ENCODE measurements at regions of chr22 and their contacts with region 1.

Region 1: GRCh38 chr22:36123673-36124630 is 36.6 kb downstream of the APOL3 start:
- DNase-seq: peak; percentile 94 to 96
- ATAC-seq: peak; percentile 96 to 99 (median 98)
- H3K4me3 ChIP-seq: peak overlapping the region in 9 of 10 donors; percentile 6 to 44 (median 29)
- H3K27ac ChIP-seq: peak overlapping the region; percentile 64 to 91 (median 81)
- H3K4me1 ChIP-seq: peaks cover 0 to 17% (median 7%) of the 10 kb centered on the region in 9 donors
- H3K27me3 ChIP-seq: no peaks in the 10 kb centered on the region
- CTCF ChIP-seq: peak; percentile 96 to 99 (median 98)

Region 2: DNA sequence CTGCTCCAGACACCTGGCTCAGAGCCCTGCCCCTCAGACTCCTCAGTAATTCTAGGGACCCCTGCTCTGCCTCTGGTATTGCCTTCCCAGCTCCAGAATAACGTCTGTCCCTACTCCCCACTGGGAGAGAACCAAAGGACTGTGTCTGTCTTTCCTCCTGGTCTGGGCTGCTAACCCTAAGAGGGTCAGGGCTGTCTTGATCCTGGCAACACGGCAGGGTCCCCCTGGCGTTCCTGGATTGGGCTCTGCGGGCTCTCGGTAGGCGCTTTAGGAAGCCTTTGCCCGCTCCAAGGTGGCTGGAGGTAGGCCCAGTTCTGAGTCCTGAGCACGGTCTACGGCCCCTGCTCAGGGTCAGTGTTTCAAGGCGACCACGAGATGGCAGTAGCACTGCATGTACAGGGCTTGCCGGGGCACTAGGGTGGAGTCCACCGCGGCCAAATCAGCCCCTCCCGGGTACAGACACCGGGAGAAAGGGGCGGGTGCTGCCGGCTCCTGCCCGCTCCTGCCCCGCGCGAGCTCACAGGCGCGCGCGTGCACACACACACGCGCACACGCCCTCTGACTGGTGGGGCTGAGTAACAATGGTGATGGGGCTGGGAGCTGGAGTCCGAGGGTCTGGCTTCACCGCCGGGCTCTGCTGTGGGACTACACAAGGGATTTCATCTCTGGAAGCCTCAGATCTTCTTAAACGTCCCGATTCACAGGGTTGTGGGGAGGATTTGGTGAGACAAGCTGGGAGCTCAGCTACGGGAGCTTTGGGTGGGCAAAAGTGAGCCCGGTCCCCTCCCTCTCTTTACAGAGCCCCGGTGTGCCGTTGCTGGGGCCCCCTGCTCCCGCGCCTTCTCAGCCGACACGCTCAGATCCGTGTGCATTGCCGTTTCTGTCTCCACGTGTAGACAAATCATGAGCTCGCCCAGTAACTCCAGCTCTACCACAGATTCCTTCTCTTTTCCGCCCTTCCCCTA is 773.1 kb before region 1 on chr22:
- intact Hi-C with region 1: loop called in 4 of 10 experiments (anchors 2 to 10 kb)
- DNase-seq: peak; percentile 92 to 93
- ATAC-seq: peak; percentile 85 to 92 (median 90)
- H3K4me3 ChIP-seq: peak overlapping the region in 9 of 10 donors; percentile 39 to 65 (median 61)
- H3K27ac ChIP-seq: peak overlapping the region in 8 of 10 donors; percentile 53 to 90 (median 73)
- H3K4me1 ChIP-seq: peaks cover 0 to 48% (median 13%) of the 10 kb centered on the region in 9 donors
- H3K27me3 ChIP-seq: no peaks in the 10 kb centered on the region
- CTCF ChIP-seq: peak; percentile 75 to 97 (median 94)

Region 3: GRCh38 chr22:35627264-35628041 is 496.5 kb before region 1 on chr22:
- intact Hi-C with region 1: loop called (anchors 2 to 10 kb)
- DNase-seq: peak; percentile 79 to 85
- ATAC-seq: peak; percentile 69 to 84 (median 78)
- H3K4me3 ChIP-seq: peak overlapping the region in 9 of 10 donors; percentile 28 to 71 (median 61)
- H3K27ac ChIP-seq: peak overlapping the region; percentile 11 to 93 (median 84)
- H3K4me1 ChIP-seq: peaks cover 3 to 37% (median 20%) of the 10 kb centered on the region in 9 donors
- H3K27me3 ChIP-seq: no peaks in the 10 kb centered on the region
- CTCF ChIP-seq: peak; percentile 17 to 75 (median 53)

Region 4: DNA sequence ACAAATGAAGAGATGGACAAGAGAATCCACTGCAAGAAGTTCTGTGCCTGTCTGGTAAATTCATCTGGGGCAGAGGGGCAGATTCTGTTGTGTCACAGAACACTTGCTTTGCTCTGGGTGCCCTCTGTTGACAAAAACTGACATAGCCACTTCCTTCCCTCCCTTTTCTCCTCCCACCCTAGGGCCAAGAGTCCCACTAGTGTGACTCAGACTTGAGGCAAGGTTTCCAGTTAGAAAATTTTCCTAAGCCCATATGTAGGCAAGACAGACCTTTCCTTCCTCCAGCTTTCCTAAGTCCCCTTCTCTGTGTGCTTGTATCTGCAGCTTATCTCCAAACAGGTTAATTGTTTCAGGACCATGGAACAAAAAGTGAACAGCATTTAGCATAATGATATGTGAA is 202.2 kb before region 1 on chr22:
- intact Hi-C with region 1: loop called in 1 of 10 experiments (anchors 2 kb)
- DNase-seq: peak in 1 of 2 donors; percentile 82
- ATAC-seq: peak; percentile 81 to 94 (median 90)
- H3K4me3 ChIP-seq: no peak overlapping the region
- H3K27ac ChIP-seq: peak overlapping the region in 6 of 10 donors; percentile 33 to 93 (median 58)
- H3K4me1 ChIP-seq: peaks cover 0 to 74% (median 53%) of the 10 kb centered on the region in 9 donors
- H3K27me3 ChIP-seq: no peaks in the 10 kb centered on the region
- CTCF ChIP-seq: peak; percentile 34 to 88 (median 75)

Region 5: GRCh38 chr22:36028646-36029405 is 95.1 kb before region 1 on chr22 and contains the start of gene RBFOX2:
- intact Hi-C with region 1: loop called in 1 of 10 experiments (anchors 5 kb)
- DNase-seq: peak; percentile 98 to 99
- ATAC-seq: peak; percentile 95 to 99 (median 96)
- H3K4me3 ChIP-seq: peak within 1 kb of the TSS; percentile 31 to 94 (median 87)
- H3K27ac ChIP-seq: peak within 1 kb of the TSS; percentile 64 to 93 (median 88)
- H3K4me1 ChIP-seq: peaks cover 0 to 43% (median 22%) of the 10 kb centered on the region in 9 donors
- H3K27me3 ChIP-seq: peaks cover 0 to 27% (median 0%) of the 10 kb centered on the region in 7 donors
- CTCF ChIP-seq: no peak
- total RNA-seq, gene RBFOX2: 68.3 to 105 (median 95.0) TPM

Region 6: GRCh38 chr22:36077271-36077670 is 46.7 kb before region 1 on chr22:
- intact Hi-C with region 1: loop called in 2 of 10 experiments (anchors 5 to 10 kb)
- DNase-seq: no peak
- ATAC-seq: peak in 6 of 8 donors; percentile 37 to 78 (median 60)
- H3K4me3 ChIP-seq: no peak overlapping the region
- H3K27ac ChIP-seq: peak overlapping the region in 5 of 10 donors; percentile 24 to 52 (median 43)
- H3K4me1 ChIP-seq: no peaks in the 10 kb centered on the region
- H3K27me3 ChIP-seq: no peaks in the 10 kb centered on the region
- CTCF ChIP-seq: no peak

Region 7: DNA sequence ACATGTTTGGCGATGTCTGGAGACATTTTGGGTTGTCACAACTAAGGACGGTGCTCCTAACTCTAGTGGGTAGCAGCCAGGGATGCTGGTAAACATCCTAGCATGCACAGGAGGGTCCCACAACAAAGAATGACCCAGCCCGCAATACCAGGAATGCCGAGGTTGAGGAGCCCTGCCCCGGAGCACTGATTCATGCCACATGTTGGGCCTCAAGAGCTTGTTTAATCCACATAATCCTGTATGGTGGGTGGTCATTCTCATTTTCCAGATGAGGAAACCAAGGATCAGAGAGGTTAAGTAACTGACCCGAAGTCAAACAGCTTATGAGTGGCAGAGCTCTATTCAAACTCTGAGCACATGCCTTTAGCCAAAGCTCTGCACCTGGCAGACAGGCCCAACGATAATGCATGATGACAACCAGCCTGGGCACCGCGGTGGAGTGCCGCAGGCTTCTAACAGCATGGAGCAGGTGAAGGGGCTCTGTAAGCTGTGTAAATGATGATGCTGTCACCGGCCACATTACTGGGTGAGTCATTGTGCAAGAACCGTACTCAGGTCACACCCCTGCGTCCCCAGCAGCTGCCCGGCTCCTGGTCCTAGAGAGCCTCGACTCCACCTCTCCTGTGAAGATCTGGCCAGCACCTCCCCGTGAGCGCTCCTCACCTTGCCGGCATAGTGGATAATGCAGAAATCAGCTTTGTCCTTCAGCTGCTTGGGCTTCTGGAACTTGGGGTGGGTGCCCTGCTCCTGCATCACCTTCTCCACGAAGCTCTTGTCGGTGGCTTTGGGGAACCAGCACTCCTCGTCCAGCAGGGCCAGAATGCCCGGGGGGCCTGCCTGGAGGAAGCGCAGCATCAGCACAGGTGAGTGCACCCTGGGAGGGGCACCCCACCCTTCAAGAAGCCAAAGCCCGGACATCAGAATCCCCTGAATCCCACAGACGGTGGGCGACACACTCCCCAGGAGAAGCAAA is 187.7 kb after region 1 on chr22:
- intact Hi-C with region 1: no loop called
- DNase-seq: no peak
- ATAC-seq: no peak
- H3K4me3 ChIP-seq: no peak overlapping the region
- H3K27ac ChIP-seq: no peak overlapping the region
- H3K4me1 ChIP-seq: peaks cover 0 to 14% (median 0%) of the 10 kb centered on the region in 9 donors
- H3K27me3 ChIP-seq: no peaks in the 10 kb centered on the region
- CTCF ChIP-seq: no peak

Measured in heart right ventricle (tissue), 16 donors.